Endothelial cell of umbilical vein (primary cell): ENCODE measurements at regions of chr3 and their contacts with region 1.

Region 1: DNA sequence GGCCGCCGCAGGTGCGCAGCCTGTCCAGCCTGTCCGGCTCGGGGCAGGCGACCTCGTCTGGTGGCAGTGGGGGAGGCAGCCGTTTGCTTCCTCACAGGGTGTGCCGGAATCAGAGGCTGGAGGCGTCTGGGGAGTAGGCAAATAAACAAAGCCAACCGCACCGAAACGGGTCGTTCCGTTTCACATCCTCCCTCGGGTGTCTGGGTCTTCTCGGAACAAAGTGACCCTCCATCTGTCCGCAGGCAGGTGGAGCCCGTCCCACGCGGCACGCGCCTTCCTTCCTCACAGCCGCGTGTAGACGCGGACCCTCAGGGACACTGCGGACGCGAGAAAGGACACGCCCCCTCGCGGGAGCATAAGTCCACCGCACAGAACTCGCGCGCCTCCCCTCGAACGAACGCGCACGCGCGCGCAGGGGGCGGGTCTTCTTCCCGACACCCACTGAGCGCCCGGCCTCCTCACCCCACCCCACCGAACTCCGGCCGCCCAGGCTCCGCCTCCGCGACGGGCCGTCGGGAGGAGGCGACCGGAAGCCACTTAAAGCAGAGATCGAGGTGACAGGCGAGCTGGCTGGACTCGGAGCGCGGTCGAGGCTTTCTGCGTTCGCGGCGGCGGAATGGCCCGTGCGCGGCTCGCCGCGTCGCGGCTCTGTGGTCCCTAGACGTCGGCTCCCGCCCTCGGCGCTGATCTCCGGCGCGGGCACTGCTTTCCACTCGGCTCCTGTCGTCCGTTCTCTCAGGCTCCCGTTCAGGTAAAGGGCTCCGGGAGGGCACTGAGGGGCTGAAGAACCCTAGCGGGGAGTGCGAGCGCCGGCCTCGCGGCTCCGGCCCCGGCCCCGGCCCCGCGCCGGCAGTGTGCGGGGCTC is at the start of gene TIPARP:
- DNase-seq: peak; percentile 99
- H3K4me3 ChIP-seq: peak within 1 kb of the TSS; percentile 79 to 96 (median 82)
- H3K27ac ChIP-seq: peak within 1 kb of the TSS; percentile 80
- H3K4me1 ChIP-seq: peaks cover 31% of the 10 kb centered on the region
- H3K27me3 ChIP-seq: no peaks in the 10 kb centered on the region
- CTCF ChIP-seq: peak; percentile 41 to 60
- POLR2A ChIP-seq: peak; percentile 98
- total RNA-seq, gene TIPARP: 20.0 and 21.2 TPM in 2 replicates

Region 2: GRCh38 chr3:156535162-156535627 is 139.1 kb before region 1 on chr3:
- CTCF ChIA-PET with region 1: interaction called, 29 read pairs
- POLR2A ChIA-PET with region 1: no interaction called
- dilution Hi-C with region 1: no loop called
- intact Hi-C with region 1: loop called (anchors 1 kb)
- DNase-seq: peak; percentile 94
- H3K4me3 ChIP-seq: no peak overlapping the region
- H3K27ac ChIP-seq: peak overlapping the region; percentile 55
- H3K4me1 ChIP-seq: peaks cover 7% of the 10 kb centered on the region
- H3K27me3 ChIP-seq: no peaks in the 10 kb centered on the region
- CTCF ChIP-seq: peak in 1 of 2 donors; percentile 22
- POLR2A ChIP-seq: peak; percentile 58

Region 3: DNA sequence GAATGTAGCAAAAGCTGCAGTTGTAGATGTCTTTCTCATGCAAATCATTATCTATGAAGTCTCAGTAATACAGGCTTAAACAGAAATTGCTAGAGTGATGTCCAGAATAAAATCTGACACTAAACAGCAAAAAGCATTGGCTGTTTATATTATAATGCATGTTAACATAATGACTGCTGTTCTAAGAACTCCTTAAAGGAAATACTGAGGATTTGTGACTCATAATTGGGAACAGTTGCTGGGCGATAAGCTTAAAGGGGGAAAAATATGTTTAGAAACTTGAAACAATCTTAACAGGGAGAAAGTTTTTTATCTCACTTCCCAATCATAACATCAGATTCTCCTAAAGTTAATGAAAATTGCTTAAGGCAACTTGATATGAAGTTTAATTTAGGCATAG is 17.6 kb after region 1 on chr3:
- CTCF ChIA-PET with region 1: interaction called, 14 read pairs
- POLR2A ChIA-PET with region 1: interaction called, 4 read pairs
- dilution Hi-C with region 1: no loop called
- intact Hi-C with region 1: loop called (anchors 1 kb)
- DNase-seq: peak; percentile 91
- H3K4me3 ChIP-seq: peak overlapping the region in 1 of 3 experiments; percentile 64
- H3K27ac ChIP-seq: peak overlapping the region; percentile 85
- H3K4me1 ChIP-seq: peaks cover 58% of the 10 kb centered on the region
- H3K27me3 ChIP-seq: no peaks in the 10 kb centered on the region
- CTCF ChIP-seq: no peak
- POLR2A ChIP-seq: peak; percentile 63

Region 4: GRCh38 chr3:156816800-156817645 is 142.7 kb after region 1 on chr3:
- CTCF ChIA-PET with region 1: interaction called, 9 read pairs
- POLR2A ChIA-PET with region 1: no interaction called
- dilution Hi-C with region 1: no loop called
- intact Hi-C with region 1: loop called (anchors 1 kb)
- DNase-seq: peak; percentile 86
- H3K4me3 ChIP-seq: peak overlapping the region in 2 of 3 experiments; percentile 37
- H3K27ac ChIP-seq: peak overlapping the region; percentile 91
- H3K4me1 ChIP-seq: peaks cover 56% of the 10 kb centered on the region
- H3K27me3 ChIP-seq: no peaks in the 10 kb centered on the region
- CTCF ChIP-seq: no peak
- POLR2A ChIP-seq: no peak

Region 5: GRCh38 chr3:157081681-157082210 is 407.5 kb after region 1 on chr3:
- CTCF ChIA-PET with region 1: interaction called, 70 read pairs
- POLR2A ChIA-PET with region 1: interaction called, 3 read pairs
- dilution Hi-C with region 1: no loop called
- intact Hi-C with region 1: loop called (anchors 1 kb)
- DNase-seq: peak; percentile 85
- H3K4me3 ChIP-seq: no peak overlapping the region
- H3K27ac ChIP-seq: no peak overlapping the region
- H3K4me1 ChIP-seq: no peaks in the 10 kb centered on the region
- H3K27me3 ChIP-seq: no peaks in the 10 kb centered on the region
- CTCF ChIP-seq: peak; percentile 94 to 96
- POLR2A ChIP-seq: no peak

Region 6: GRCh38 chr3:157130467-157131251 is 456.4 kb after region 1 on chr3:
- CTCF ChIA-PET with region 1: interaction called, 17 read pairs
- POLR2A ChIA-PET with region 1: no interaction called
- dilution Hi-C with region 1: loop called (anchors 25 kb)
- intact Hi-C with region 1: loop called (anchors 1 kb)
- DNase-seq: peak; percentile 61
- H3K4me3 ChIP-seq: no peak overlapping the region
- H3K27ac ChIP-seq: peak overlapping the region; percentile 60
- H3K4me1 ChIP-seq: peaks cover 39% of the 10 kb centered on the region
- H3K27me3 ChIP-seq: no peaks in the 10 kb centered on the region
- CTCF ChIP-seq: peak; percentile 58 to 59
- POLR2A ChIP-seq: no peak

Region 7: DNA sequence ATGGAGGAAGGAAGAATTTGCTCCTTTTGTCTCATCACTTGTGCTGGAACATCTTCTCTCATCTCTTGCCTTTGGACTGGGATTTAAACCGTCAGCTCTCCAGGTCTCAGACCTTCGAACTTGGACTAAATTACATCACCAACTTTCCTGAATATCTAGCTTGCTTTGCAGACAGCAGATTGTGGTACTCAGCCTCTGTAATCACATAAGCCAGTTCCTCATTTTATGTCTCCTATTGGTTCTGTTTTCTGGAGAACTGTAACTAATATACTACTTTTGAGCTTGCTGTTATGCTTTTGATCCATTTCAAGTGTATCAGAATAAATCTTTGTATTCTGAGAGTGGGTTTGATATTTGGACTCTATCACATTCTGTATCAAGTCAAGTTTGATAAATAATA is 993.2 kb after region 1 on chr3:
- CTCF ChIA-PET with region 1: no interaction called
- POLR2A ChIA-PET with region 1: no interaction called
- dilution Hi-C with region 1: no loop called
- intact Hi-C with region 1: no loop called
- DNase-seq: no peak
- H3K4me3 ChIP-seq: no peak overlapping the region
- H3K27ac ChIP-seq: no peak overlapping the region
- H3K4me1 ChIP-seq: no peaks in the 10 kb centered on the region
- H3K27me3 ChIP-seq: peaks cover 0 to 3% of the 10 kb centered on the region in 2 experiments
- CTCF ChIP-seq: no peak
- POLR2A ChIP-seq: no peak